Ascending aorta (tissue), 2 donors: ENCODE measurements at regions of chr7 and their contacts with region 1.

Region 1: DNA sequence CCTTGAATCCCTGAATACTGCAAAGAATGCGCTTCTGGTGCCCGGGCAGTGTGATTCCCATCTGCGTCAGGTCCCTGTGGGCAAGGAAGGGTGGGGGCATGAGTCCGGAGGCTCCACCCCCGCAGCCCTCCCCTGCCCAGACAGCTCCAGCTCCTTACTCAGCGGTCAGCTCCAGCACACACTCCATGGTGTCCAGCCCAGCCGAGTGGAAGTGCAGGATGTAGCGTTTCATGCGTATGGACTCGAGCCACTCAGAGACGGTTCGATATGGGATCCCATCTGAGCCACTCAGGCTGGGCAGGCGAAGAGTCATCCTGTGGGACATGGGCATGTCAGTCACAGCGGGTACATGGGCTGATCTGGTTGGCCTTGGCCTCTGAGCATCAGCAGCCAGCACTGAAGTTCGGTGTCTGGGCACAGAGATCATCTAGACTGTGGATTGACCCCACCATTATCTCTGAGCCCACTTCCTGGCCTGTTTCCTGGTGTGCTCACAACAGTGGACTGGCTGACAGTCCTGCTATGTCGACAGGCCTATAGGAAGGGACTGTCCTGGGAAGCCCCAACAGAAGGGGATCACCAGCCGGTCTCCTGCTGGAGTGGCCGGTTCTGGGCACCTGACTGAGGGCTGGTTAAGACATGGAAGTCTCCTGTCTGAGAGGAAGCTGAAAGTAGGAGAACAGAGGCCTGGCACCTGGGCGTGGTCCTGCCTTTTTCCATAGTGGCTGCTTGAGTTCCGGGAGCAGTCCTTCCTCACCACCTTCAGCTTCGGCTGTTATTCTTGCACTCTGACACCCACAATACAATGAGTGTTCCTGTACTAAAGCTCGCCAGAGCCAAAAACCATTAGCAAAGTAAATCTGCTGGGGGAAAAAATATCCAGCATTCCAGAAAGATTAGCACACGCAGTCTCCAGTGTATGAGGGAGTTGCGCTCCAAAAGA is 10.6 kb downstream of the ZYX start:
- DNase-seq: peak; percentile 66 to 96
- H3K4me3 ChIP-seq: peak overlapping the region; percentile 1 to 42
- H3K27ac ChIP-seq: peak overlapping the region; percentile 97 to 99
- H3K4me1 ChIP-seq: peaks cover 35 to 73% of the 10 kb centered on the region in 2 donors
- H3K27me3 ChIP-seq: no peaks in the 10 kb centered on the region
- CTCF ChIP-seq: no peak

Region 2: GRCh38 chr7:143258831-143259230 is 132.9 kb before region 1 on chr7:
- intact Hi-C with region 1: no loop called
- DNase-seq: no peak
- H3K4me3 ChIP-seq: no peak overlapping the region
- H3K27ac ChIP-seq: no peak overlapping the region
- H3K4me1 ChIP-seq: peaks cover 0 to under 1% of the 10 kb centered on the region in 2 donors
- H3K27me3 ChIP-seq: no peaks in the 10 kb centered on the region
- CTCF ChIP-seq: no peak

Region 3: DNA sequence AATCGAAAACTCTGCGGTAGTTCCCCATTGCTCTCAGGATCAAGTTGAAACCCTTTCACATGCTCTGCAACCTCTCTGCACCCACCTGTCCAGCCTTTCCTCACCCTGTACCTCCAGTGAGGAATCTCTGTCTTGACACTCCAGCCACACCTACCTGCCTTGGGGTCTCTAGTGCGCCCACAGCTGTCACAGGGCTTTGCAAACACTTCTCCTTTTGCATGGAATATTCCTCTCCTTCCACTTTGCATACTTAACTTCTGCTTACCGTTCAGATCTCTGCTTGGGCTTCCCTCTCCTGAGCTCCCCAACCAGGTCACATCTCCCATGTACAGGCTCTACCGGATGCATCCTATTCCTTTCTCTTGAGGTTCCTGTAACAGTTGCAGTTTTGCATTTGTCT is 17.2 kb before region 1 on chr7:
- intact Hi-C with region 1: no loop called
- DNase-seq: no peak
- H3K4me3 ChIP-seq: no peak overlapping the region
- H3K27ac ChIP-seq: no peak overlapping the region
- H3K4me1 ChIP-seq: no peaks in the 10 kb centered on the region
- H3K27me3 ChIP-seq: no peaks in the 10 kb centered on the region
- CTCF ChIP-seq: no peak

Region 4: DNA sequence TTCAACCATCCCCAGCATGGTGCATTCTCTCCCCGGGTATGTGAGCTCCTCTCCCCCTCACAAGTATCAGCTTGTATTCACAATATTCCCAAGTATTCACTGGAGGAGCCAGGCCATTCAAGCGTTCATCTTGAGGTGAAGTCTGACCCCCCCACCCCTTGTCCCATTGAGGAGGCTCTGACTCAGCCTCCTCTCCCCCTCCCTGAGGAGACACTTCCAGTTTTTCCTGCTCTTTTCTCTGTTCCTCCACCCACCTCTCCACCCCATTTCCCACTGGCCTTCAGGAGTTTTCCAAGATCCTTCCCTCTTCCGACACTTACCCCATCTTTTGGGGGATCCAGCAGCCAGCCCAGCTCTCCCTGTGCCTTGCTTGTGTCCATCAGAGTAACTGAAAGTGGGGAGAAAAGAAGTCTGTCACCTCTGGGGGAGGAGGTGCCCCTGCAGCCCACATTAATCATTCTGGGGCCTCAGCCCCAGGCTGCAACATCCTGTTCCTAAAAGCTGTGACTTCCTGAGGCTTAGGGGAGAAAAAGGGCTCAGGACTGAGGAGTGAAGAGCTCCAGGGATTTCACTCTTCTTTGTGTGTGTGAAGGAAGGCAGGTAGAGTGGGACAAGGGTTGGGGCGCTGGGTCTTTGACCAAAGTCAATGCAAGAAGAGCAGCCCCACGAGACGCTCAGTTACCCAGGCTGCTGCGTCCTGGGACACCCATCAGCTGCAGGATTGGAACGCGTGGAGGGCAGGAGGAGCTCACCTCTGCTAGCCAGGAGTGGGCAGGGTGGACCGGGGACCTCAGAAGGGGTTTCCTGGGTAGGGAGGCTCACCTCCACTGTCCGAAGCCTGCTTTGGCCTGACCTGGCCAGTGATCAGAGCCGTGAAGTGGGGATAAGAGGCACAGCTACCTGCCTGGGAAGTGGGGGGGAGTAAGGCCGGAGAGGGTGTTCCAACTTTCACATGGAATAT is 15.8 kb after region 1 on chr7:
- intact Hi-C with region 1: loop called (anchors 2 kb)
- DNase-seq: peak in 1 of 2 donors; percentile 50
- H3K4me3 ChIP-seq: peak overlapping the region in 1 of 2 donors; percentile 35
- H3K27ac ChIP-seq: peak overlapping the region; percentile 32 to 49
- H3K4me1 ChIP-seq: peaks cover 8 to 23% of the 10 kb centered on the region in 2 donors
- H3K27me3 ChIP-seq: no peaks in the 10 kb centered on the region
- CTCF ChIP-seq: no peak